Left ventricle myocardium superior (tissue), 1 donor: ENCODE measurements at regions of chr3 and their contacts with region 1.

Region 1: DNA sequence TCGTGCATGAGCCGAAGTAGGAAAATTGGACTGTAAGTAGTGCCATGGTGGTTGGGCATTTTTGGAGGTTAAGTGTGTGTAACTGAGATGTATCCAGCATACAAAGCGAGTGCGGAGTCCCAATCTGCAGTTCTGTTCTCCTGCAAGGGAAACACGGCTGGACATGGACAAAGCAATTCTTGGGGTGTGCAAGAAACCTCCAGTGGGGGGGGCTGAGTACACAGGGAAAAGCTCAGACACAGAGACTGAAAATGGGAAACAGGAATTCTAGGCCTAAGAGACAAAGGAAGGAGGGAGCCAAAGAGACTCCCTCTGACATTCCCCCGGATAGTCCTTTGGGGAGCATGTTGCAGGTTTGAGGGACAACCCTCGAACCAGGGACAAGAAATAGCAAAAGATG is 83.2 kb upstream of the PLSCR4 start:
- DNase-seq: no peak
- ATAC-seq: peak; percentile 25

Region 2: DNA sequence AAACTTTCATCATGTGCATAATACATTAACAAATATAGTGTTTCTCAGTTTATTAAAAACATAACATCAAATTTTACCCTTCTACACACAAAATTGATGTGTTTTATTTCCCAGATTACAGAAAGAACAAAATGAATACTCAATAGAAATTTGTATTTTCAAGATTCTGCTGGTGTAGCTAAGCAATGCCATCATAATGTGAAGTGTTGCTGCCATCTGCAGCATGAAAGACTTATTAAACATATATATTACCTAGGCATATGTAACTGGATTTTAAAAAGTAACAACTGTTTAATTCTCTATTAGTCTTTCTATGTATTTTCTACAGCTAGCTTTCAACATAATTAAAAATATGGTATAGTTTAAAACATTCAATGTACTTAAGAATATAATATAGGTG is 243.5 kb after region 1 on chr3:
- intact Hi-C with region 1: loop called (anchors 10 kb)
- DNase-seq: no peak
- ATAC-seq: no peak

Region 3: DNA sequence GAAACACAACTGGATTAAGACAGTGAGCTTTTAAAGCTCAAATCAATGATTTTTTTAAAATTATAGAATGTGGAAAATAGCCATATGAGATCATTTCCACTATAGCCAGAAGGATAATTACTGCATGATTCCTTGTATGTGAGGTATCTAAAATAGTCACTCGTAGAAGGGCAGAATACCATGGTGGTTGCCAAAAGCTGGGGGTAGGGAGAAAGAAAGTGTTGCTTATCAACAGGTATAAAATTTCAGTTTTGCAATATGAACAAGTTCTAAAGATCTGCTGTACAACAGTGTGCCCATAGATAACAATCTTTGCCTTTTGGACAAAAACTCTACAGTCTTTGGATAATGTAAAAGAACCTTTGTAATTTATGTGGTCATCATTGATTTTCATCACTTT is 425.1 kb after region 1 on chr3:
- intact Hi-C with region 1: no loop called
- DNase-seq: no peak
- ATAC-seq: no peak

Region 4: GRCh38 chr3:147141516-147142288 is 807.6 kb after region 1 on chr3:
- intact Hi-C with region 1: no loop called
- DNase-seq: no peak
- ATAC-seq: no peak